Cardiac septum (tissue), 1 donor: ENCODE measurements at regions of chr22 and their contacts with region 1.

Region 1: GRCh38 chr22:36387752-36388518 is at the start of gene MYH9:
- DNase-seq: peak; percentile 100
- total RNA-seq, gene MYH9: 282 TPM

Region 2: DNA sequence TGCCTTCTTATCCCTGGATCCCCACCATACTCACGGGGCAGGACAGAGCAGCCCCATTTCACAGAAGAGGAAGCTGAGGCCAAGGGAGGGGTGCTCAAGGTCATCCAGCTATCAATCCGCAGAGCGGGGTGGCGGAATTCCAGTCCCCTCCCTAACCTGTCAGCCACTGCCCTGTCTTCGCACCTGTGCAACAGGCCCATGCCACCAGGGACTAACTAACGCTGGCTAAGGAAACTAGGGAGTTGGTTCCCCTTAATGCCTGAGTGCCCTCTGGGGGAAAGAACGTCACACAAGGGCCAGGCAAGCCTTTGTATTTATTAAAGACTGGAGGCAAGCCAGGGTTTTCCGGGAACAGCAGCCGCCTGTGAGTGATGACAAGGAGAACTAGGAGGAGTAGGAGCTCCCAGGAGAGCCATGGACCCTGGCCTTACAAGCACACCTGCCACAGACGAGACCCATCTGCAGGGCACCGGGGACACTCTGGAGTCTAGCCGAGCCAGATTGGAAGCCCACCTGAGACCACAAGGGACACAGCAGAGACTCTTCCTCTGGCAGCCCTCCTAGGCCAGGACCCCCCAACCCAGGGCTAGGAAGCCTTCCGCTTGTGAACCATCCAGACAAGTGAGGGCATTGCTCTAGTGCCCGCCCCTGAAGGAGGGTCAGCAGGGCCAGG is 64.6 kb before region 1 on chr22:
- intact Hi-C with region 1: loop called (anchors 2 kb)
- DNase-seq: peak; percentile 88

Region 3: GRCh38 chr22:36331306-36331911 is 56.5 kb before region 1 on chr22:
- intact Hi-C with region 1: loop called (anchors 2 kb)
- DNase-seq: peak; percentile 97

Region 4: GRCh38 chr22:36419177-36419911 is 31.4 kb after region 1 on chr22:
- intact Hi-C with region 1: no loop called
- DNase-seq: no peak

Region 5: DNA sequence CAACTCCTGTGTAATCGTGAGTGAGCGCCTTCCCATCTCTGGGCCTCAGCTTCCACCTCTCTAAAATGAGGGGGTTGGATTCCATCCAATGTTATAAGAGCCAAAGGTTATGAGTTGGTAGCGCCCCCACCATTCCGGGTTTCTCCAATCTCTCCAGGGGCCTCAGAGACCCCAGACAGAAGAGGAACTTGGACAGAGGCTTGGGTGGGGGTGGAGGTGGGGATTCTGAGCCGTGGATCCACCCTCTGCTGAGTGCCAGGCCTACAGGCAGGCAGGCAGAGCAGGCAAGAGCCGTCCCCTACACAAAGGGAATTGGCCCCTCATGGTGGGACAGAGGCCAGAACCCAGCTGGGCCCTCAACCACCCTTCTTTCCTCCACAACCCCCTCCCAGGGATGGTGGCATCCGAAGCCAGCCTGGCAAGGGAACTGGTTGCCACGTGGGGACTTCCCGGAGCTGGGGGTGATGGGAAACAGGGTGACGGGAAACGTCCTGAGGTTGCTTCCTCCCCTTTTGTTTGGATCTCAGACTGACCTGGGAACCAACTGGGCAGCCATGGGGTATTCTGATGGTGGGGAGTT is 61.8 kb after region 1 on chr22:
- intact Hi-C with region 1: loop called (anchors 2 kb)
- DNase-seq: no peak

Region 6: DNA sequence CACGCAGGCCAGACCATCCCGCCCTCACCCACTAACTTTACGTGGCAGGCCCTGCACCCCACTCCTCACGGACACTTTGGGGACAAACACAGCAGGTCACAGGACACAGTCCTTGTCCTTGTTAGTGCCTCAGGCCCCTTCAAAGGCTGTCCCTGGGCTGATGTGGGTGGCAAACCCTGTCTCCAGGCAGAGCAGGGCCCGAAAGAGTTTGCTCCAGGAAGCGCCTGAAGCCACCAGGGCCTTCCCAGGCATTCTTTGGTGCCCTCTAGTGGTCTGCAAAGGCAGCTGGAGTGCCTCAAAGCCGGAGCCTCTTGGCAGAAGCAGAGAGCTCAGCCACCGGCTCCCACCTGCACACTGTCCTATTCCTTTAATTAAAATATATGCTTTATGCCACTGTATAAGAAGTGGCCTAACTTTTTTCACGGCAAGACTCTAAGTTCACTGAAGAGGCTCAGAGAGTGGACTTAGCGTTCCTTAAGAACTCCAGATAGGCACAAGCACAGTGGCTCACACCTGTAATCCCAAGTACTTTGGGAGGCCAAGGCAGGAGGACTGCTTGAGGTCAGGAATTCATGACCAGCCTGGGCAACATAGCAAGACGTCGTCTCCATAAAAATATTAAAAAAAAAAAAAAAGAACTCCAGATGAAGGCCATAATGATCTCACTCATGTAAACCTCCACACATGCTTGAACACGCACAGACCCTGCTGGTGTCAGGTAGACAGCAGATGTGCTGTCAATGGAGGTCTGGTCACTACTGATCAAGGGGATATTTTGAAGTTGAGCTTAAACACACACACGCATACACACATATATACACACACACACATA is 82.4 kb after region 1 on chr22:
- intact Hi-C with region 1: loop called (anchors 2 kb)
- DNase-seq: peak; percentile 92

Region 7: DNA sequence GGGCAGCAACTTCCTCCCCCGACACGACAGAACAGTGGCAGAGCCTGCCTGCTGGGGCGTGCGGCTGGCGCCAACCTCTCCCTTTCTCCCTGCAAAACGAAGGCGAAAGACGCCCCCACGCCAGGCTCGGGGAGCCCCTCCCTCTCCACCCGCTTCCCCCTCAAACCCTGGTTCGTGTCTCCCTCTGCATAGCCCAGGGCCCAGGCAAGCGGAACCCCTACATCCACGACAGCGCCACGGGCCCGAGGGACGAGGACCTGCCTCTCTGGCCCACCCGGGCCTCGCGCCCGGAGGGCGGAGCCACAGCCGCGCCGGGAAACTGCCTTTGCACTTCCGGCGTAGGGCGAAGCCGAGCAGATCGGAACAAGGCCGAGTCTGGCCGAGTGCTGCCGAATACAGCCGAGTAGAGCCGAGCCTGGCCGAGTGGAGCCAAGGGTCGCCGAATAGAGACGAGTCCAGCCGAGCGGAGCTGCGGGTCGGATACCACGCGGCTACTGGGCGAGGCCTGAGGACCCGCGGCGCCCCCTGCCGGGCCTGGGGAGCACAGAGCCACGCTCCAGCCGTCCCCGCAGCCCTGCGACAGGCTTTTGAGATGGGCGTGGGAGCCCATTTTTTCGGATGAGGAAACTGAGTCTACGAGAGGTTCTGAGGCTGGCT is 811.3 kb after region 1 on chr22:
- intact Hi-C with region 1: loop called (anchors 10 kb)
- DNase-seq: peak; percentile 99